ENCODE measurements at regions of chr1 and their contacts with region 1.

Region 1: GRCh38 chr1:32521165-32521564 is 18.1 kb upstream of the ZBTB8A start:
- DNase-seq: no peak

Region 2: DNA sequence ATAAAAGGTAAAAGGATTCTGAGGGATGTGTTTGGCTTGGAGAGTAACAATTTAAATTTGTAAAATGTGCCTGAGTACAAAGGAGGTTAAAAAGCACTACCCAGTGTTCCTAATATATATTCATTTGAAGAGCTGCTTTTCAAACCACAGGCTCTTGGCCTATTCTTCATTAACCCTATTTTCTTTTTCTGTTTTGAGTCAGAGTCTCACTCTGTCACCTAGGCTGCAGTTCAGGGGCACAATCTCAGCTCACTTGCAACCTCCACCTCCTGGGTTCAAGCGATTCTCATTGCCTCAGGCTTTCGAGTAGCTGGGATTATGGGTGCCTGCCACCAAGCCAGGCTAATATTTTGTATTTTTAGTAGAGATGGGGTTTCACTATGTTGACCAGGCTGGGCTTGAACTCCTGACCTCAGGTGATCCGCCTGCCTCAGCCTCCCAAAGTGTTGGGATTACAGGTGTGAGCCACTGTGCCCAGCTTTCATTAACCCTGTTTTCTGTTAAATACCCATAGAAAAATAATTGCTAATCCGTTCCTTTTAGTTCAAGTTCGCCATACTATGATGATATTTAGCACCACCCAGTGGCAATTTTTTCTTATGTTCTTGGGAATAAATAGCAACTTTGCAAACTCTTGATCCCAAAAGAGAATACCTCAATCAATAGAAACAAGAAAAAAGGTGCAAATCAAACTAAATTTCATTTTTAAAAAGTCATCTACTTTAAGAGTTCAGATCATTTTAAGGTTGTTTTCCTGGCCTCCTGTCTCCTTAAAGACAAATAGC is 98.7 kb after region 1 on chr1:
- intact Hi-C with region 1: loop called (anchors 10 kb)
- DNase-seq: no peak

Region 3: DNA sequence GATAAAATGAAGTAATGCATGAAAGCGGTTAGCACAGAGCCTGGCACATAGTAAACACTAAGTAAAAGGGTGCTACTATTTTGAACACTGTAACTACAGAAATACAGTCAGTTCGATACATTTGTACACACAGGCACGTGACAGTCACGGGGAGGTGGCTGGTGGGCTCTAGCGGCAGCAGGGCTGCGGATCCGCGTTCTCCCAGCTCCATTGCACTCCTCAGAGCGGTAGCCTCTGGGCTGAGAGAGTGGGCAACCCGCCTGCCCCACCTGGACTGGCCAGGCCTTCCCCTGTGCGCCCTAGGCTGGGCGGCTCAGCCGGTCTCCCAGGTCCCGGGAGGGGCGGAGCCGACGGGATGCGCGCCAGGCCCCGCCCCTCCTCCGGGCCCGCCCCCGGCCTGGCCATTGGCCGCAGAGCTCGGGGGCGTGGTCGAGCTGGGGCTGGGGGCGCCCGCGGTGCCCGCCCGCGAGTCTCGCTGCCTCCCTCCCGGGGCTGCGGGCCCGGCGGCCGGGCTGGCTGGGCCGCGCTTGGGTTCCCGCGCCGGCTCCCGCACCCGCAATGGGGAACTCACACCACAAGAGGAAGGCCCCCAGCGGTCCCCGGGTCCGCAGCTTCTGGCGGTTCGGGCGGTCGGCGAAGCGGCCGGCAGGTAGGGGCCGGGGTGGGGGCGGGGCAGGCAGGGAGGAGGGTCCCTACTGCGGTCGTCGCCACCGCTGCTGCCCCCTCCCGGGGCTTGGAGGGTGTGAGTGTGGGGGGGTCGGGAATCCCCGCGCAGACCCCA is 232.6 kb after region 1 on chr1:
- intact Hi-C with region 1: no loop called
- DNase-seq: peak; percentile 40 to 96 (median 68)

Measured in posterior cingulate gyrus (tissue), 11 donors.